Posterior vena cava (tissue), 2 donors: ENCODE measurements at regions of chr6 and their contacts with region 1.

Region 1: DNA sequence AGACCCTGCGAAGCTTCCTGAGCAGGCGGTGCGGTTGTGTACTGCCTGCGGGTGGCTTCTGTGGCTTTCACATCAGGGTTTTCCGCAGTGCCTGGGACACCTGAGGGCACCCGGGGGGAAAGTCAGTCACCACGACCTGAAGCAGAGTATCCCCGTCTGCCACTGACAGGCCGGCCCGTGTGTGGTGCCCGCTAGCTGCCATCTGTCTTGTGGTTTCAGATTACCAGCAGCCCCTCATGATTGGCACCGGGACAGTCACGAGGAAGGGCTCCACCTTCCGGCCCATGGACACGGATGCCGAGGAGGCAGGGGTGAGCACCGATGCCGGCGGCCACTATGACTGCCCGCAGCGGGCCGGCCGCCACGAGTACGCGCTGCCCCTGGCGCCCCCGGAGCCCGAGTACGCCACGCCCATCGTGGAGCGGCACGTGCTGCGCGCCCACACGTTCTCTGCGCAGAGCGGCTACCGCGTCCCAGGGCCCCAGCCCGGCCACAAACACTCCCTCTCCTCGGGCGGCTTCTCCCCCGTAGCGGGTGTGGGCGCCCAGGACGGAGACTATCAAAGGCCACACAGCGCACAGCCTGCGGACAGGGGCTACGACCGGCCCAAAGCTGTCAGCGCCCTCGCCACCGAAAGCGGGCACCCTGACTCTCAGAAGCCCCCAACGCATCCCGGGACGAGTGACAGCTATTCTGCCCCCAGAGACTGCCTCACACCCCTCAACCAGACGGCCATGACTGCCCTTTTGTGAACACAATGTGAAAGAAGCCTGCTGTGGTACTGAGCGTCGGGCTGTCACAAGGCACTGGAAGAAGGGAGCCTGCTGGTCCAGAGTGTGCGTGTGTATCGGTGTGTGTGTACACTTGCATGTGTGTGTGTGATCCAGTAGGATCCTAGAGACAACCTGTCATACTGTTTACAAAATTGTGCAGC is 54.4 kb downstream of the GOPC start:
- DNase-seq: peak; percentile 84

Region 2: GRCh38 chr6:117449549-117450439 is 98.2 kb before region 1 on chr6:
- intact Hi-C with region 1: loop called in 1 of 2 experiments (anchors 5 kb)
- DNase-seq: no peak

Region 3: DNA sequence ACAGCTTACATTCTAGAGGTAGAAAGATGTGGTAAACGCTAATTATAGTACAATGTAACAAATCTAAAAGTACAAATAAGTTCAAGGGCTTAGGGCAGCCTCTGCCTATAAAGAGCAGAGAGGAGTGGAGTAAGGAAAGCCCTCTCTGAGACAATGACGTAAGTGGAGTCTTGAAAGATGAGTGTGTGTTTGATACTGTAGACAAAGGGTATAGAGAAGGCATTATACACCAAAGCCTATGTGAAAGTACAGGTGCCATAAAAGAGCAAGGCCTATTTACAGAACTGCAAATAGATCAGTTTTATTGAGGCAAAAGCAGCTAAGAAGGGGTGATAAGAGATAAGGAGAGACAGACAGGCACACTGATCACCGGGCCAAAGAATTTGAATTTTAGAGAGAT is 43.5 kb after region 1 on chr6:
- intact Hi-C with region 1: loop called in 1 of 2 experiments (anchors 10 kb)
- DNase-seq: no peak

Region 4: GRCh38 chr6:118537574-118537973 is 989.6 kb after region 1 on chr6:
- intact Hi-C with region 1: no loop called
- DNase-seq: no peak